HepG2 (cell line): ENCODE measurements at regions of chr9 and their contacts with region 1.

Region 1: DNA sequence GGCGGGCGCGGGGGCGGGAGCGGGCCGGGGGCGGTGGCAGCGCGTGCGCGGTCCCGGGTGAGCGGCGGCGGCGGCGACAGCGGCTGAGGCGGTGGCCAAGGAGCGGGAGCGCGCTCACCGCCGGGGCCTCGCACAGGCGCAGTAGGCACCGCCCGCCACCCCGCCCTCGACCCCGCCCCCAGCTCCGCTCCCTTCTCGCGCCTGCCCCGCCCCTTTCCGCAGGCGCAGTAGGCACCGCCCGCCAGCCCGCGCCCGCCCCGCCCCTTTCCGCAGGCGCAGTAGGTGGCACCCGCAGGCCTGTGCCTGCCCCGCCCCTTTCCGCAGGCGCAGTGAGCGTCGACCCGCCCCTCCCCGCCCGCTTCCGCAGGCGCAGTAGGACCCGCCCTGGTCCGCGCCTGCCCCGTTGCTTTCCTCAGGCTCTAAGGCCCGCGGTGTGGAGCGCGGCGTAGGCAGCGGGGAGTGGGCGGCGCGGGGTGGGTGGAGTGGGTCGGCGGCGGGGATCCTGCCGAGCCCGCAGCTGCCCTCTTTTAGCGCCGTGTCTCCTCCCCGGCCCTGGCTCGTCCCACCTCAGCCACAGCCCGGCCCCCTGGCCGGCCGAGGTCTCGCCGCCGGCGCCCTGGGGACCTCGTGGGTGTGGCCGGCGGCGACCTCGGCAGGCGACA is at the start of gene CAMSAP1:
- DNase-seq: peak; percentile 77
- ATAC-seq: peak; percentile 93
- H3K4me3 ChIP-seq: peak within 1 kb of the TSS; percentile 69 to 89 (median 84)
- H3K27ac ChIP-seq: peak within 1 kb of the TSS; percentile 66
- H3K4me1 ChIP-seq: peaks cover 58% of the 10 kb centered on the region
- H3K27me3 ChIP-seq: no peaks in the 10 kb centered on the region
- CTCF ChIP-seq: no peak
- EP300 ChIP-seq: no peak
- POLR2A ChIP-seq: peak; percentile 30 to 88; a peak in 3 of 4 replicates
- RAD21 ChIP-seq: no peak
- total RNA-seq, gene CAMSAP1: 10.2 and 12.4 TPM in 2 replicates

Region 2: DNA sequence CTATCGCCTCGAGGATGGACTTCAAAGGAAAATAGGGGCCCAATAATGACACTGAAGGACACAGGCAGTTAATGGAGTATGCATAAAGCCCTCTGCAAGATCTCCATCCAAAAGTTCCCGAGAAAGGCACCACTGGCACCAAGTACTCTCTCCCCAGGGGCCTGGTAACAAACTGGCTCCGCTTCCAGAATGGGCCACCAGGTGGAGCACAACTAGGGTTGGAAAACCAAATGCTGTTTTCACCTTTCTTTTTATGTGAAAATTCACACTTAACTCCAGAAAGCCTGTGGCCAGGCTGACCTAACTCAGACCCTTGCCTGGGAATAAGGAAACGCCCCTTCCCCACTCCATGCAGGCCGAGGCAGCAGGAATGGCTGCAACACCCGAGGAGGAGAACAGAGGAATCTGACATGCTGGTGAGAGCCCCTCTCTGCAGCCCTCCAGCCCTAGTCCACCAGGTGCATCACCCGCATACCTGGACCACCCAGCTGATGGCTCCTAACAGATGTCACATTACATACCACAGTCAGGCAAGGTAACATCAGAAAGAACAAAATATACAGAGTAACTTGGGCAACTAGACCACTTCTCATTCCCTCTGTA is 43.0 kb before region 1 on chr9:
- CTCF ChIA-PET with region 1: no interaction called
- POLR2A ChIA-PET with region 1: no interaction called
- in situ Hi-C with region 1: no loop called
- intact Hi-C with region 1: loop called (anchors 2 kb)
- DNase-seq: peak; percentile 10
- ATAC-seq: peak; percentile 77
- H3K4me3 ChIP-seq: no peak overlapping the region
- H3K27ac ChIP-seq: no peak overlapping the region
- H3K4me1 ChIP-seq: no peaks in the 10 kb centered on the region
- H3K27me3 ChIP-seq: no peaks in the 10 kb centered on the region
- CTCF ChIP-seq: peak; percentile 76
- EP300 ChIP-seq: no peak
- POLR2A ChIP-seq: no peak
- RAD21 ChIP-seq: 0 out of 2 replicates have a peak, but pooled peaks have one; percentile 28